BJ (cell line): ENCODE measurements at regions of chr1 and their contacts with region 1.

Region 1: DNA sequence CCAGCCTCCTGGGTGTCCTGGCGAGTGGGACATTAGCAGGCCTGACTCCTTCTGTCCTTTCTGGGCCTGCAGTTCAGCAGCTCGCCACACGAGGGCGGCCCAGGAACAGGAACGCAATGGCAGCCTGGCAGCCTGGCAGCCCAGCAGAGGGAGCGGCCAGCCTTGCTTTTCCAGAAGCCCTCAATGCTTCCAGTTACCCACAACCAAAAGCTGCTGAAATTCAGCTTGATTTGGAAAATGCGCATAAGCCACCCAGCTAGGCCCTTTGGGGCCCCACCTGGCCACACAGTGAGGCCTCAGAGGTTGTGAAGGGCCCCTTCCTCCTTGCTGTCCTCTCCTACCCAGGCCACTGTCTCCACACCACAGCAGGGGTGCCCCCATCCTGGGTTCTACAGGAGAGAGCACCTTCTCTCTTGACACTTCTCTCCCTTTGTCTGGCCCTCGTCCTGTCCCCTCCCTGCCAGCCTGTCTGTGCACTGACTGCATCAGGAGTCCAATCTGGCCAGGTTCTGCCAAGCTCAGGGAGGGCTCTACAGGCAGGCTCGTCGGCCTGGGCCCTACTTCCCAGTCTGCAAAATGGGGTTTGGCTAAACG is 103.4 kb upstream of the VAMP3 start:
- DNase-seq: no peak
- H3K4me3 ChIP-seq: no peak overlapping the region
- H3K27me3 ChIP-seq: peaks cover 2% of the 10 kb centered on the region; the same call in 1 of the 2 replicates
- CTCF ChIP-seq: peak; percentile 100

Region 2: GRCh38 chr1:7501084-7501491 is 166.6 kb before region 1 on chr1:
- CTCF ChIA-PET with region 1: no interaction called
- POLR2A ChIA-PET with region 1: no interaction called
- DNase-seq: no peak
- H3K4me3 ChIP-seq: no peak overlapping the region
- H3K27me3 ChIP-seq: no peaks in the 10 kb centered on the region
- CTCF ChIP-seq: no peak

Region 3: GRCh38 chr1:7549277-7550161 is 118.2 kb before region 1 on chr1:
- CTCF ChIA-PET with region 1: no interaction called
- POLR2A ChIA-PET with region 1: no interaction called
- DNase-seq: peak; percentile 26
- H3K4me3 ChIP-seq: no peak overlapping the region
- H3K27me3 ChIP-seq: no peaks in the 10 kb centered on the region; the same call in 1 of the 2 replicates
- CTCF ChIP-seq: no peak

Region 4: DNA sequence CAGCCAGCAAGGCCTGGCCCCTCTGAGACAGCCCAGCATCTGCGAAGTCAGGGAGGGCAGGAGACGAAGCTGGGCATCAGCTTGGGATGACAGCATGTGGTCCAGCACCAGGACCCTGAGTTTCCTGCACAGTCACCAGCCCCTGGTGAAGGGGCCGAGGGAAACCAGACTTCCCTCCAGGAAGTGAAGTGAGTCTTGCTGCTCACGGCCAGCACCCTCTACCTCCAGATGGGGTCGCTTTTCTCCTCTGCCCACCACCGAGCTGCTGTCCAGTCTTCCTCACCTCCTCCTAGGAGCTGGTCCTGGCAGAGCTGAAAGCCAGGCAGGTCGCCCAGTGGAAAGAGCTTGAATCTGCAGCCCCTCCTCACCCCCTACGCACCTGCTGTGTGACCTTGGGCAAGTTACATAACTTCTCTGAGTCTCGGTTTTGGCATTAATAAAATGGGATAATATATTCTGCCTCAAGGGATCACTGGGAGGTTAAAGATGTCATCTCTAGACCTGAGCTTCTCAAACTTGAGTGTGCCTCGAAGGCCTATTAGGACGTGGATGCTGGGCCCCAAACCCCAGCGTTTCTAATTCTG is 15.1 kb before region 1 on chr1:
- CTCF ChIA-PET with region 1: interaction called, 14 read pairs
- POLR2A ChIA-PET with region 1: no interaction called
- DNase-seq: no peak
- H3K4me3 ChIP-seq: no peak overlapping the region
- H3K27me3 ChIP-seq: peaks cover 2% of the 10 kb centered on the region
- CTCF ChIP-seq: no peak

Region 5: GRCh38 chr1:7690496-7691182 is 22.9 kb after region 1 on chr1:
- CTCF ChIA-PET with region 1: interaction called, 27 read pairs
- POLR2A ChIA-PET with region 1: no interaction called
- DNase-seq: no peak
- H3K4me3 ChIP-seq: no peak overlapping the region
- H3K27me3 ChIP-seq: peaks cover 2% of the 10 kb centered on the region; the same call in 1 of the 2 replicates
- CTCF ChIP-seq: no peak

Region 6: GRCh38 chr1:7745791-7746190 is 78.1 kb after region 1 on chr1:
- CTCF ChIA-PET with region 1: interaction called, 431 read pairs
- POLR2A ChIA-PET with region 1: no interaction called
- DNase-seq: no peak
- H3K4me3 ChIP-seq: no peak overlapping the region
- H3K27me3 ChIP-seq: 0 out of 2 replicates have a peak, but pooled peaks cover 1% of the 10 kb centered on the region
- CTCF ChIP-seq: no peak

Region 7: GRCh38 chr1:7760245-7760644 is 92.5 kb after region 1 on chr1:
- CTCF ChIA-PET with region 1: interaction called, 431 read pairs
- POLR2A ChIA-PET with region 1: no interaction called
- DNase-seq: no peak
- H3K4me3 ChIP-seq: no peak overlapping the region
- H3K27me3 ChIP-seq: peaks cover 4% of the 10 kb centered on the region
- CTCF ChIP-seq: no peak

Region 8: DNA sequence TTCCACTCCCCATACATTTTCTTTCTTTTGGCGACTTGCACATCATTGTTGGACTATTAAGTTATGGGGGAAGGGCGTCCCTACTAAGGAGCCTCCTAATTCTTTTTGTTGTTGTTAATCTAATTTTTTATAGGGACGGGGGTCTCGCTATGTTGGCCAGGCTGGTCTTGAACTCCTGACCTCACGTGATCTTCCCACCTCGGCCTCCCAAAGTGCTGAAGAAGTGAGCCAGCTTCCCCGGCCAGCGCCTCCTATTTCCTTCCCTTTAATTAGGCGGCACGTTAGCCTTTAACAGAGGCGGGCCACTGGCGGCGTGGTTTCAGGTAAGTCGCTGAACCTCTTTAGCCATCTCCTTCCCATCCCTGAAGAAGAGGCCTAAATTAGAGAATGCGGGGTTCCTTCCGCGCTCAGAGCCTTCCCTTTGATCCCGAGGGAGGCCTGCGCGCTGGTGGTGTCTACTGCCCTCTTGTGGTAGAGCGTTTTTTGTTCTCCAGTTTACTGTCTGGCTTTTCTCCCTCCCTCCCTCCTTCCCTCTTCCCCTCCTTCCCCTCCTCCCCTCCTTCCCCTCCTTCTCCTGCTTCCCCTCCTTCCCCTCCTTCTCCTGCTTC is 234.9 kb after region 1 on chr1:
- CTCF ChIA-PET with region 1: interaction called, 66 read pairs
- POLR2A ChIA-PET with region 1: no interaction called
- DNase-seq: no peak
- H3K4me3 ChIP-seq: no peak overlapping the region
- H3K27me3 ChIP-seq: peaks cover 3% of the 10 kb centered on the region; the same call in 1 of the 2 replicates
- CTCF ChIP-seq: peak; percentile 82

Region 9: DNA sequence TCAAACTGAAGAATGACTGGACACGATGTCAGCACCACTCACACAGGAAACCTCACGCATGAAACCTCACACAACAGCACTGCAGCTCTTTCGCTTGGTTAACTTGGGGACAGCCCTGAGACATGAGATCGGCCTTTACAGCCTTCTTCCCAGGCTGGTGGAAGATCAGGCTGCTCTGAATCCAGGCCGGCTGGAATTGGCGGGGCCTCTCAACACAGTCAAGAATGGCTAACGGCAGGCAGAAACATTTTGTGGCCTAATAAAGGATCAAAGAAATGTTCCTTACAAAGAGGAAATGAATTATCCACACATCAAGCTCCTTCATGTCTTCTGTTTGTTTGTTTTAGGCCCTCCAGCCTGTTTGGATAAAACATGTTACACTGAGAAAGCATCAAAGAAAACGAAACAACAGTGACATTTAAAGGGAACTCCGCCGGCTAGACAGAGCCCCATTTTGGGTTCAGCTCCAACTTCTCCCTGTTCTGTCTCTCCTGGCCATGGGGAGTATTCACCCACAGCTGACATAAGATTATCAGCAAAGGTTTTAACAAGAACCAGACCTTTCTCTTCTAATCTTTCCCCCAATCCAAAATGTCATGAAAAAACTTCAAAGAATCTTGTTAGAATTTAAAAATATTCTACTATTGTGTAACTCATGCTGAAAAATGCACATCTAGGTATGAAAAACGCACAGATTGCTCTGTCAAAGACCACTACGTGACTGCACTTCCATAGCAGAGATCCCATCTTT is 781.4 kb after region 1 on chr1:
- CTCF ChIA-PET with region 1: no interaction called
- POLR2A ChIA-PET with region 1: no interaction called
- DNase-seq: no peak
- H3K4me3 ChIP-seq: no peak overlapping the region
- H3K27me3 ChIP-seq: no peaks in the 10 kb centered on the region
- CTCF ChIP-seq: no peak